Aorta (tissue), 5 donors: ENCODE measurements at regions of chr6 and their contacts with region 1.

Region 1: GRCh38 chr6:12011276-12012076 is 636 bp upstream of the HIVEP1 start:
- DNase-seq: peak; percentile 99
- ATAC-seq: peak; percentile 95
- H3K4me3 ChIP-seq: peak overlapping the region; percentile 70 to 100
- H3K27ac ChIP-seq: peak overlapping the region; percentile 77 to 89
- H3K4me1 ChIP-seq: no peaks in the 10 kb centered on the region
- H3K27me3 ChIP-seq: no peaks in the 10 kb centered on the region

Region 2: DNA sequence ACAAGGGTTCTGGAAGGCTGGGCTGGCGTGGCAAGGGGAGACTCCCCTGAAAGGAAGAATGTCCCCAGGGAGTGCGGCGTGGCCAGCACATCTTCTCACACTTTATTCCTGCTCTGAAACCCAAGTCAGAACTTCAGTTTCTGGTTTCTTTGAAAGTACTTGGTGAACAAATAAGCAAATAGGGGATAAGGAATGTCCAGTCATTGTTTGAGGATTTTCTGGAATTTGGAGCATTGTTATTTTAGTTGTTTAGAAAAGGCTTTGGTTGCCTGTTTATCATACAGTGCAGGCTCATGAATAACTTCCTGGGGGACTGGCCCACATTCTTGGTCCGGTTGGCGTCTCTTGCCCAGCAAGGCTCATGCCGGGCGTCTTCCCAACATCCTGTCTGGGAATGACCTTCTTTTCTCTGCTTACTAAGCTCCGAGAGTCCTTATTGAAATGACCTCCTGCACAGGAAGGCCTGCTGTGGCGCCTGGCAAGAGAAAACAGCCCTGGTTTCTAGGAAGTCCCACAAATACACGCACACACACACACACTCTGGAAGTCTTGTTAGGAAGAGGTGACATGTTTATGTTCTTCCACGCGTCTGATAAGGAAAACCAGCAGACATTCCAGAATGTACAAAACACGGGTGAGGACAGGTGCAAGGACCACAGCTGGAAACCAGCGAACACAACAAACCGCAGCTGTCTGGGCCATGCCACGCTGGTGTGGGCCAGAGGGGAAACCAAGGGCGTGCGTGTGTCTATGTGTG is 402.0 kb before region 1 on chr6:
- intact Hi-C with region 1: loop called in 1 of 2 experiments (anchors 10 kb)
- DNase-seq: peak; percentile 88 to 89
- ATAC-seq: peak; percentile 83
- H3K4me3 ChIP-seq: no peak overlapping the region
- H3K27ac ChIP-seq: peak overlapping the region; percentile 86 to 92
- H3K4me1 ChIP-seq: peaks cover 6 to 13% of the 10 kb centered on the region in 2 donors
- H3K27me3 ChIP-seq: no peaks in the 10 kb centered on the region

Region 3: GRCh38 chr6:11700118-11700718 is 311.3 kb before region 1 on chr6:
- intact Hi-C with region 1: loop called in 1 of 2 experiments (anchors 10 kb)
- DNase-seq: no peak
- ATAC-seq: no peak
- H3K4me3 ChIP-seq: no peak overlapping the region
- H3K27ac ChIP-seq: no peak overlapping the region
- H3K4me1 ChIP-seq: no peaks in the 10 kb centered on the region
- H3K27me3 ChIP-seq: no peaks in the 10 kb centered on the region

Region 4: DNA sequence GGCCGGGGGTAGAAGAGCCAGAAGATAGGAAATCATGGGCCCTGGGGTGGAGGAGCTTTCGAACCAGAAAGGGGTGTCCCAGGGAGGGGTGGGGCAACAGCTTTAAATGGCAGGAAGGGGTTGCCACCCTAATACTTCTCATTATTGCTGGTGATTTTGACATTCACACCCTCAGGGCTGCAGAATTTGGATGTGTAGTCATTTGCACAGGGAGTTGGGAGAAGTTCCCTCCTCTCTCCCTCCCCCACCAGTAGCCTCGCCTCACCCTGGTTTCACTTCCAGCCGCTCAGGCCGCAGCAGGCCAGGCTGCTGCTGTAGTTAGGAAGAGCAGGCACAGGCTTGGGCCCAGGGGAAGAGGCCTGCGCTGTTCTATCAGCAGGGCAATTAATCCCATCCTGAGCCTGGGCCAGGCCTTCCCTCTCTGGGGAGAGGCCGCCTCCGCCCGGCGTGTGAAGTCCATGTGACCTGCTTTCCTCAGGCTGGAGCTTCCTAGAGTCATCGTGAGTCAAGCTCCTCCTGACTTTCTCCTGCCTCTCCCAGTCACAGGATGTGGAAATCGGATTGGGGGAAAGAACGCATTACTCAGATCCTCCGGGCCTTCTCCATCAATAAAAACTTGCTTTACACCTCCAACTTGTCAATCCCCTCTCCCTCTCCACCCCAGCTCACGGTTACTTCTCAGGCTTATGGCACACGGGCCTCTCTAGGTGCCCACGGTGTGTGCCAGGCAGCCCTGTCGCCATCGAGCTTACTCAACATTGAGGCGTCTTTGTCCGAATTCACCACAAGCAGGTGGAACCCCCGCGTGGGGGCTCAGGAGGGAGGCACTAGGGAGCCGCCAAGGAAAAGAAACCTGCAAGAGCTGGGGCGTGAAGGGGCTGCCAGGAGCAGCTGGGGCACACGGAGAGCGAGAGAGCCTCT is 240.7 kb before region 1 on chr6:
- intact Hi-C with region 1: loop called in 1 of 2 experiments (anchors 2 kb)
- DNase-seq: peak; percentile 95 to 96
- ATAC-seq: peak; percentile 94
- H3K4me3 ChIP-seq: no peak overlapping the region
- H3K27ac ChIP-seq: peak overlapping the region in 1 of 2 donors; percentile 93
- H3K4me1 ChIP-seq: peaks cover under 1 to 4% of the 10 kb centered on the region in 2 donors
- H3K27me3 ChIP-seq: no peaks in the 10 kb centered on the region

Region 5: DNA sequence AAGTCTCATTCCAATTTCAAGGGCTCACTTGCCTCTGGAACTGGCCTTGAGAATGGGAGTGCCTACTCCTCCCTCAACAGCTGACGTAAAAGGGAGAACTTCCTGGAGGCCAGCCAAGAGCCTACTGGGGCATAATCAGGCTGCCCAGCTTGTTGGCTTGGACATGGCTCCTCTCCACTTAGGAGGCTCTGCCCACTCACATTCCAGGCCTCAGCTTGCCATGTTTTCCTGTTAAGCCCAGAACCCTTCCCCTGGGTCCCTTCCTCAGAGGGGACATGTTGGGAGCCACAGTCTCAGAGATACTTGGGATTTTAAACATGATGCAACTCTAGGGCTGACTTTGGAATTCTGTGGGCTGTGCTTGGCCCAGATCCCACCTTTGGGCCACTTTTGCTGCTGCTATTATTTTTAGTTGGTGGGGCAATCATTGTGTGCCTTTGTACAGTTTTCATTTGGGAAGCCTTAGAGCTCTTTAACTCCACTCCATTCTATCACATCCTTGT is 201.4 kb before region 1 on chr6:
- intact Hi-C with region 1: loop called in 1 of 2 experiments (anchors 5 kb)
- DNase-seq: peak; percentile 88 to 92
- ATAC-seq: peak; percentile 76
- H3K4me3 ChIP-seq: no peak overlapping the region
- H3K27ac ChIP-seq: peak overlapping the region in 1 of 2 donors; percentile 65
- H3K4me1 ChIP-seq: peaks cover 2 to 3% of the 10 kb centered on the region in 2 donors
- H3K27me3 ChIP-seq: no peaks in the 10 kb centered on the region

Region 6: DNA sequence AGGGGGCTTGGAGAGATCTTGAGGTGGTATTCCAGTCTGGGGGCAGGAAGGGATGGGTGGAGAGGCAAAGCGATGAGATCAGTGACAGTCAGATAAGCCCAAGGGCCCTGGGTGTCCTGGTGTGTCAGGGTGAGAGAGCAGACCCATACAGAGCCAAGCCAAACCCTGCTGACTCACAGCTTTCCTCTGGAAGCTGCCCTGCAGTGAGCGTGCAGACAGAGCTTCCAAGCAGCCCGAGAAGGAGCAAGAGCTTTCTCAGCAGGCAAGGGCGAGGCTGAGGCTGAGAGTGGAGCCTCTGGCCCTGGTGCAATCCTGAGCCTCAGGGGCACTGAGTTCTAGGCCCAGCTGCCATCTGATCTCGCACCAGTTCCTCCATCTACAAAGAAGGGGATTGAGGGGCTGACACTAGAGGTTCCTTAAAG is 90.4 kb before region 1 on chr6:
- intact Hi-C with region 1: loop called in 1 of 2 experiments (anchors 5 kb)
- DNase-seq: peak; percentile 86 to 88
- ATAC-seq: peak; percentile 90
- H3K4me3 ChIP-seq: no peak overlapping the region
- H3K27ac ChIP-seq: peak overlapping the region in 1 of 2 donors; percentile 36
- H3K4me1 ChIP-seq: no peaks in the 10 kb centered on the region
- H3K27me3 ChIP-seq: no peaks in the 10 kb centered on the region